ENCODE measurements at regions of chr11 and their contacts with region 1.

Region 1: GRCh38 chr11:128733440-128734102 is 39.7 kb downstream of the FLI1 start:
- DNase-seq: peak; percentile 81
- H3K4me3 Mint-ChIP-seq: peak overlapping the region; percentile 72
- H3K27ac Mint-ChIP-seq: peak overlapping the region; percentile 83
- H3K4me1 Mint-ChIP-seq: peaks cover 77% of the 10 kb centered on the region
- H3K27me3 Mint-ChIP-seq: no peaks in the 10 kb centered on the region

Region 2: GRCh38 chr11:128568166-128568778 is 165.3 kb before region 1 on chr11:
- intact Hi-C with region 1: no loop called
- DNase-seq: no peak
- H3K4me3 Mint-ChIP-seq: no peak overlapping the region
- H3K27ac Mint-ChIP-seq: no peak overlapping the region
- H3K4me1 Mint-ChIP-seq: peaks cover 13% of the 10 kb centered on the region
- H3K27me3 Mint-ChIP-seq: no peaks in the 10 kb centered on the region

Region 3: DNA sequence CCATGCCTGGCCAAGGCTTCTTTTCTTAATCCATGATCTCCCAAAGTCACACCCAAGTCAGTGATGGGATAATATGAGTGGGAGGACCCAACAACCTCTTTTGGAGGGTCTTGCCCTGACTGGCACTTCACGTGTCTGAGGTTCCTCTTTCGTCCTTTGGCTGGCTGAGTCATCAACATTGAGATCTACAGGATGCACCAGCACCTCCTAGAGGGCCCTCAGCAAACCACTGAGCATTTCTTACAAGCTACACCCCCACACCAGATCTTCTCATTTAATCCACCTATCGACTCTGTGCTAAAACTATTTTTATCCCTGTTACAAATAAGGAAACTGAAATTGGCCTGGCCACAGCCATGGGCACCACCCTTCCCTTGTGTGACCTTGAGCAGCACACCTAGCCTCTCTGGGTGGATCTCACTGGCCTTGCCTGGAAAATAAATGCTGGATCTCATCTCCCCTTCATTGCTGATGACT is 23.7 kb after region 1 on chr11:
- intact Hi-C with region 1: loop called (anchors 2 kb)
- DNase-seq: peak; percentile 89
- H3K4me3 Mint-ChIP-seq: peak overlapping the region; percentile 37
- H3K27ac Mint-ChIP-seq: peak overlapping the region; percentile 90
- H3K4me1 Mint-ChIP-seq: peaks cover 59% of the 10 kb centered on the region
- H3K27me3 Mint-ChIP-seq: no peaks in the 10 kb centered on the region

Measured in activated CD4-positive, alpha-beta T cell treated with anti-CD3 and anti-CD28 coated beads, Interleukin-2, amount 10 ng/mL, durations not matched to agents 24 days and 14 days (primary cell).